Calu3 (cell line): ENCODE measurements at regions of chr21 and their contacts with region 1.

Region 1: DNA sequence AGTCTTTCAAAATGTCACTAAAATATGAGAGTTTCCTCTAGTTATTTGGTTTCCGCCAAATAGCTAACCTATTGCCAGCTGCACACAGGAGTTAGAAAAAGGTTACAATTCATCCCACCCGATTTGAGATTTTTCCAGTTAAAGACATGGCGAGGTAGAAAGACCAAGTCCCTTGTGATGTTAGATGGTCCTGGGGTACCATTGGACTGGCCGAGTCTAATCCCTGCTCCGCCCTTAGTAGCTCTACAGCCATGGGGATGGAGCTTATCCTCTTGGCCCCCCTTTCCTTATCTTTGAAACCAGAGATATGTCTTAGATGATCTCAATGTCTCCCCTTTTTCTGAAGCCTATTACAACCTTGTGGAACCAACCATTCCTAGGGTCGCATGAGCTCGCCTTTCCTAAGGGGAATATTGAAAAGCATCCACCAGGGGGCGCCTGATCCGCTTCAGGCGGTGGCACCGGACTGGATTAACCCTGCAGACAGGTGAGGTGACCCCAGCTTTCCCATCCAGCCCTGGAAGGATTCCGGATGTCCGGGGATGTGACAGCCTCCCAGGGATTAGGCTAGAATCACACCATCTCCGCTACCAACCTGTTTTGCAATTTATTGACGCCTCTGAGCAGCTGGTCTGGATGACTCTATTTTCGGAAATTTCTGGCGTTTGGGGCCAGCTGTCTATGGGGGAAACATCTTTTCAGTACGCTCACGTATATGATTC is 68.3 kb upstream of the SIM2 start:
- DNase-seq: peak; percentile 74
- H3K4me3 Mint-ChIP-seq: no peak overlapping the region
- H3K27ac Mint-ChIP-seq: no peak overlapping the region
- H3K4me1 Mint-ChIP-seq: no peaks in the 10 kb centered on the region
- H3K27me3 Mint-ChIP-seq: no peaks in the 10 kb centered on the region
- CTCF ChIP-seq: peak; percentile 63

Region 2: GRCh38 chr21:36567216-36567885 is 63.3 kb before region 1 on chr21:
- CTCF ChIA-PET with region 1: no interaction called
- intact Hi-C with region 1: no loop called
- DNase-seq: no peak
- H3K4me3 Mint-ChIP-seq: no peak overlapping the region
- H3K27ac Mint-ChIP-seq: no peak overlapping the region
- H3K4me1 Mint-ChIP-seq: no peaks in the 10 kb centered on the region
- H3K27me3 Mint-ChIP-seq: peaks cover 75% of the 10 kb centered on the region
- CTCF ChIP-seq: no peak

Region 3: GRCh38 chr21:36678538-36678937 is 47.9 kb after region 1 on chr21:
- CTCF ChIA-PET with region 1: no interaction called
- intact Hi-C with region 1: no loop called
- DNase-seq: no peak
- H3K4me3 Mint-ChIP-seq: no peak overlapping the region
- H3K27ac Mint-ChIP-seq: no peak overlapping the region
- H3K4me1 Mint-ChIP-seq: peaks cover 10% of the 10 kb centered on the region
- H3K27me3 Mint-ChIP-seq: no peaks in the 10 kb centered on the region
- CTCF ChIP-seq: no peak

Region 4: GRCh38 chr21:36698981-36699891 is 68.6 kb after region 1 on chr21 and contains the start of gene SIM2:
- CTCF ChIA-PET with region 1: interaction called, 6 read pairs
- intact Hi-C with region 1: loop called (anchors 10 kb)
- DNase-seq: peak; percentile 77
- H3K4me3 Mint-ChIP-seq: peak within 1 kb of the TSS; percentile 82
- H3K27ac Mint-ChIP-seq: peak within 1 kb of the TSS; percentile 72
- H3K4me1 Mint-ChIP-seq: no peaks in the 10 kb centered on the region
- H3K27me3 Mint-ChIP-seq: no peaks in the 10 kb centered on the region
- CTCF ChIP-seq: no peak
- total RNA-seq, gene SIM2: 15.1 and 15.4 TPM in 2 replicates